ENCODE measurements at regions of chr17 and their contacts with region 1.

Region 1: DNA sequence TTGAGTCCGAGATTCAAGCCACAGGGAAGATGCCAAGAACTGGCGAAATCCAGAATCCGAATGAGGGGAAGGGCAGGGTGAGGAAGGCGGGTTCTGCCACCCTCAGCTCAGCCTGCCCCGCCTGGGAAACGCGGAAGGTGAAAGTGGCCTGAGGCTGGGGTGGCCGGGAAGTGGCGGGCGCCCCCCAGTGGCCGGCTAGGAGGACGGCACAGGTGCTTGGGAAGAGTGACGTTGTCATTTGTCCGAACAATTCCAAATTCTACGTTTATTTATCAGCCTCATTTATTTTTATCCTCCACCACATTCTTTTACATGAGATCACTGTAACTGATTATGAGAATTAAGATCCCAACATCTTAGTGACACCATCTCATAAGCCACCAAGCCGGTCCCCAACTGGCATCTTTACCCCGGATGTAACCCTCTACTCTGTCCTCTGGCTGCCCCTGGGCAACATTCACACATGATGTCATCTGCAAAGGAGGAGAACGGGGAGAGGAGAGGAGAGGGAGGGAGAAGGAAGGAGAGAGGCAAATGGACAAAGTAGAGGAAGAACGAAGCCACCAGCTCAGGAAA is 21.3 kb downstream of the SRCIN1 start:
- DNase-seq: peak in 4 of 10 donors; percentile 71 to 87 (median 78)
- H3K4me3 ChIP-seq: peak overlapping the region in 9 of 59 donors; percentile 1 to 35 (median 9)
- H3K27ac ChIP-seq: peak overlapping the region in 36 of 59 donors; percentile 1 to 81 (median 54)
- H3K27me3 ChIP-seq: peaks cover 0 to 6% (median 0%) of the 10 kb centered on the region in 45 donors
- CTCF ChIP-seq: peak; percentile 82 to 98 (median 95)

Region 2: DNA sequence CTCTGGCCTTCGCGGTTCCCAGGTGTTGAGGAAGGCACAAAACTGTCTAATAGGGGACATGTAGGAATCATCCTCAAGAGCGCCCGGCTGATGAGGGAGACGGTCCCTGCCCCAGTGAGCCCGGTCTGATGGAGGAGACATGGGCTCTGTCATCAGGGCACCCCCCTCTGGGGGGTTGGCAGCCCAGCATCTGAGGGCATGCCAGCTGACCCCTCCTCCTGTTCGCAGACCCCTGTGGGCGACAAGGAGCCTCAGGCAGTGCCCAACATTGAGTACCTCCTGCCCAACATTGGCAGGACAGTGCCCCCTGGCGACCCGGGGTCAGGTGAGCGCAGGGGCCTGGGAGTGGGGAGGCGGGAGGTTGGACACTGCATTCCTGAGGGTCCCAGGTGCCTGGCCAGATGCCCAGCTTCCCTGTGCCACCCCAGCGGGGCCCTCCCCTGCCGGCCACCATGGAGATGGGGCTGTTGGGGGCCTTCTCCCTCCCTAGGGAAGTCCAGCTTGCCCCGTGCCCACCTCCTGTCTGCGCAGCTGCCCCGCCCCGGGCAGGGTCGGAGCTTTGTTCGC is 86.2 kb before region 1 on chr17:
- intact Hi-C with region 1: loop called in 1 of 2 experiments (anchors 10 kb)
- DNase-seq: no peak
- H3K4me3 ChIP-seq: no peak overlapping the region
- H3K27ac ChIP-seq: peak overlapping the region in 1 of 59 donors; percentile 48
- H3K27me3 ChIP-seq: no peaks in the 10 kb centered on the region
- CTCF ChIP-seq: no peak

Region 3: DNA sequence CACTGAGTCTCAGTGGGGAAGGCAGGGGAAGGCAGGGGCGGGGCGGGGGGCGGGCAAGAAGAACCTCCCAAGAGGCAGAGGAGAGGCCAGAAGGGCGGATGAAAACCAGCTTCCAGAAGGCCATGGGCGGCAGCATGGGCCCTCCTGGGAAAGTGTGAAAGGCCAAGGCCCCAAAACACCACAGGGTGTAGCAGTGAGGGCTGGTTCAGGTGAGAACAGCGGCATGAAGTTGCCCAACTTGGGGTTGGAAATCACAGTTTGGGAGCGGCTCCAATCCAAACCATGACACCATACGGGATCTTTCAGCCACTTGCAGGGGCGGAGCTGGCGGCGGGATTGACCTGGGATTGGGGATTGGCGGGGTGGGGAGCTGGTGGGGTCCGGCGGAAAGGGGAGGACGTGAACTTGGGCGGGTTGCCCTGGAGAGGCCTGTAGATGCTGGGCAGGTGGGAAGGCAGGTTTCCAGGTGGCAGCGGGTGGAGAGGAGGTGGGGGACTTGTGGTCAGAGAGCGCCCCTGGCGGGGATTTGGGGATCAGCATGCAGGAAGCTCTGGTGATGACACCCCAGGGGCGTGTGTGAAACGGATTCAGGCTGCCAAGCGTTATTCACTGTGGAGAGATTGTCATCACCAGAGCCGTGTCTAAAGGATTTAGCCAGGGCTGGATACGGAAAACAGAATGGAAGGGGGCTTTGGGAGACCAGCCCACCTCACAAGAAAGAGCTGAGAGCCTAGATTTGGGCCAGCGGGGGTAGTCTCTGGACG is 75.2 kb before region 1 on chr17:
- intact Hi-C with region 1: loop called in 1 of 2 experiments (anchors 5 kb)
- DNase-seq: peak; percentile 68 to 94 (median 86)
- H3K4me3 ChIP-seq: peak overlapping the region in 43 of 59 donors; percentile 5 to 51 (median 35)
- H3K27ac ChIP-seq: peak overlapping the region in 49 of 59 donors; percentile 12 to 85 (median 68)
- H3K27me3 ChIP-seq: no peaks in the 10 kb centered on the region
- CTCF ChIP-seq: peak; percentile 39 to 86 (median 68)

Region 4: GRCh38 chr17:38557836-38558727 is 26.4 kb before region 1 on chr17:
- intact Hi-C with region 1: loop called in 1 of 2 experiments (anchors 1 kb)
- DNase-seq: peak; percentile 82 to 93 (median 90)
- H3K4me3 ChIP-seq: peak overlapping the region in 57 of 59 donors; percentile 14 to 61 (median 43)
- H3K27ac ChIP-seq: peak overlapping the region; percentile 37 to 99 (median 80)
- H3K27me3 ChIP-seq: peaks cover 0 to 9% (median 0%) of the 10 kb centered on the region in 45 donors
- CTCF ChIP-seq: peak; percentile 34 to 100 (median 95)